ENCODE measurements at regions of chr19 and their contacts with region 1.

Region 1: DNA sequence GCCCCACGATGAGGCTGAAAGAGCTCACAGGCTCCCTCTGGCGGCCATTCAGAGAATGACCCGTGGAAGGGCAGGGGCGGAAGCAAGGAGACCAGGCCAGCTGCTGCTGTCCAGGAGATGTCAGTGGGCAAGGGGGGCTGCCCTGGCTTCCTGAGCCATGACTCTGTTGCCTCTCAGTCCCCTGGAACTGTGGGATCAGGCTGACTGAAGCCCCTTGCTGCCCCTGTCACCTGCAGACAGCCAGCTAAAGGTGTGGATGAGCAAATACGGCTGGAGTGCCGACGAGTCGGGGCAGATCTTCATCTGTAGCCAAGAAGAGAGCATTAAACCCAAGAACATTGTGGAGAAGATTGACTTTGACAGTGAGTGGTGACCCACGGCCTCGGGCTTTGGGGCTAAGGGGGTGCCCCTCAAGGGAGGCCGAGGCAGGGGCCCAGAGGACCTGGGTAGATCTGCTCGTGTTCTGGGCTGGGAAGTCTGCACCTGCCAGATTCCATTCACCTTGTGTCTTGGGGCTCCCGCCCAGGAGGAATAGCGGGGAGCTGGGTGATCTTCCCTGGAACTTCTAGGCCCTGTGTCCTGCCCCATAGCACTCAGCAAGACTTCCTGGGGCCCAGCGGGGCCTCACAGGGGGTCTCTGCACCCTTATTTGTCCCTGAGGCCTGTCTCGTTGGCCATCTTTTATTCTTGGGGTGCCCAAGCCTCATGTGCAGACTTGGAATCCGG is 12.5 kb upstream of the ACTN4 start:
- DNase-seq: peak; percentile 84
- CTCF ChIP-seq: peak; percentile 86

Region 2: DNA sequence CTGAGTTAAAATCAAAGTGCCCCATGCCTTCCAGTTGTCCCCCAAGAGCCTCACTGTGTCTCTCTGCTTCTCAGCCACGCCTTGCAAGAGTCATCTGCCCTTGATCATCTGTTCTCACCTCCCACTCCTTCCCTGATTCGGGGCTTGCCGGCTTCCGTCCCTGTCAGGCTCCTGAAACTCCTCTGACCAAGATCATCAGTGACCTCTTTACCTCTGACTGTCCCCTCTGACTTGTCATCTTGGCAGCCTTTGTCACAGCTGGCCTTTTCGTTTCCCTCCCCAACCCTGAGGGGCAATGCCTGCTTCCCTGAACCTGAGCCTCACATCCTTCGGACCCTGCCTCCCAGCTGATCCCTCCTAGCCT is 83.5 kb before region 1 on chr19:
- in situ Hi-C with region 1: loop called (anchors 5 kb)
- DNase-seq: peak; percentile 75
- CTCF ChIP-seq: no peak

Measured in GM13976 (cell line).